ENCODE measurements at regions of chr17 and their contacts with region 1.

Region 1: GRCh38 chr17:56939901-56940343 is 20.9 kb downstream of the COIL start:
- DNase-seq: no peak
- ATAC-seq: peak; percentile 89
- H3K4me3 ChIP-seq: no peak overlapping the region
- H3K27ac ChIP-seq: no peak overlapping the region
- H3K4me1 ChIP-seq: no peaks in the 10 kb centered on the region
- H3K27me3 ChIP-seq: no peaks in the 10 kb centered on the region
- CTCF ChIP-seq: peak; percentile 73

Region 2: GRCh38 chr17:56819431-56820145 is 120.3 kb before region 1 on chr17:
- intact Hi-C with region 1: loop called (anchors 5 kb)
- DNase-seq: no peak
- ATAC-seq: peak; percentile 97
- H3K4me3 ChIP-seq: no peak overlapping the region
- H3K27ac ChIP-seq: no peak overlapping the region
- H3K4me1 ChIP-seq: peaks cover 7% of the 10 kb centered on the region
- H3K27me3 ChIP-seq: no peaks in the 10 kb centered on the region
- CTCF ChIP-seq: peak; percentile 91

Region 3: DNA sequence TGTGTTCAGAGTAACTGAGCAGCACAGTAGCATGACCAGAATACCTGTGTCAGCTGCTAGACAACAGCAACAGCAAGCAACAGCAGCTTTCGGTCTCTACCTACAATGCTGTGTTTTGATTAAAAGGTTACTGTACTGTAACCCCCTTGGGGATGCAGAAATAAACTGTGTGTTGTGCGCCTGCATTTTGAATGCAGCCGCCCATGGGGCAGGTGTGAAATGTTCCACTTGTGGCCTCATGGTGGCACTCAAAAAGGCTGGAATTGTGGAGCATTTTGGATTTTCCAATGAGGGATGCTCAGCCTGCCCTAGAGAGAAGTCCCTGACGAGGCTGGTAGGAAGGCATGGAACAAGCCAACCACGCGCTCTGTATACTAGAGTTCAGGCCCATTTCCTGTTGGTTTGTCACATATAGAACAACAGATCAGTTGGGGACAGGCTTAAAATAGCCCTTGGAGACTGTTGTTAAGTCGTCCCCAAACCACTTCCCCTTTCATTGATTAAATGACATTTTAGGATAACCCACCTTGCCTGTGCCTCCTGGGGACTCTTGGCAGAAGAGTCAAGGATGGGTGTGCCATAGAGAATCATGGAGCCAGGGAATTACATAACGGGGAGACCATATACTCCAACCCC is 65.1 kb after region 1 on chr17:
- intact Hi-C with region 1: no loop called
- DNase-seq: no peak
- ATAC-seq: peak; percentile 60
- H3K4me3 ChIP-seq: no peak overlapping the region
- H3K27ac ChIP-seq: no peak overlapping the region
- H3K4me1 ChIP-seq: peaks cover 3% of the 10 kb centered on the region
- H3K27me3 ChIP-seq: no peaks in the 10 kb centered on the region
- CTCF ChIP-seq: peak; percentile 29